ENCODE measurements at regions of chr12 and their contacts with region 1.

Region 1: DNA sequence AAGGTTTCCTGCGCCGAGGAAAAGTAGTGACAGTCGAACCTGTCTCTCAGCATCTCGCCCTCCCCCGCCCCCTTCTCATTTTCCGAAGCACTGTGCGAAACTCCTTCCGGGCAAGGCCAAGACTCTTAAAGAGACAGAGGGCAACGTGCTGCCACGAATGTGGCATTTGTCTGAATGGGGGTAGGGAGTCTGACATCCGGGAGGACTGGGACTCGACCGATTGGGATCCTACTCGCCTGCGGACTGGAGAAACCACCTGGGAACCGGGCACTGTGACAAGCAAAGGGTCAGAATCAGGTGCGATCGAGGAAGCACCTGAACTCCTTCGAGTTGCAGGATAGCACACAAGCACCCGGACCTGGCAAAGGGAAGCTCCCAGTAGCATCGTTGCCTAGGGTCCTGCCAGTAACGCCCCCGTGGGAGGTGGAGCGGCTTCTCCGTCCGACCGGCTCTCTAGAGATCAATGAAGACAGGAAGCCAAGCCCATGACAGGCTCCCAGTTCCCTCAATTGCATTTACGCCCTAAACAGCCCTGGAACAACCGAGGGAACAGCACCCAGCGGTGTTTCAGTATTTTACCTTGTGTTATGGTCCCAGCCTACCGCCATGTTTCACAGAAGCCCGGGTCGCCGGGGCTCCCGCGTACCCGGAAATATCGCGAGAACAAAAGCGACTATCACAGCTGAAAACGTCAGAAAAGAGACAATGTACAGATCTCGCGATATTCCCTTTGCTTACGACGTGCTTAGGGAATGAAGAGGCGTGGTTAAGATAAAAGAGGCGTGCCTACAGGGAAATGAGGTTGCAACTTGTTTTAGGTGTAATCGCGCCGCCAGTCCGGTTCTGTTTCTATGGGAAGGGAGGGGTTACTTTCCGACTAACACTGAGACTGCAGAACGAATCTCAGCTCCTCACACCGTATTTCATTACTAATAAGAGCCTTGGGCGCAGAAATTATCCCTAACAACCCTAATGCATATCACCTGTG is at the start of gene ERGIC2:
- DNase-seq: peak; percentile 93
- ATAC-seq: peak; percentile 95
- H3K4me3 Mint-ChIP-seq: peak within 1 kb of the TSS; percentile 92
- H3K27ac Mint-ChIP-seq: peak within 1 kb of the TSS; percentile 93
- H3K4me1 Mint-ChIP-seq: peaks cover 42% of the 10 kb centered on the region
- H3K27me3 Mint-ChIP-seq: no peaks in the 10 kb centered on the region
- total RNA-seq, gene ERGIC2: 104 to 151 TPM

Region 2: GRCh38 chr12:29148911-29149690 is 231.7 kb before region 1 on chr12 and contains the start of gene FAR2:
- CTCF ChIA-PET with region 1: no interaction called
- POLR2A ChIA-PET with region 1: no interaction called
- intact Hi-C with region 1: loop called in 1 of 2 experiments (anchors 2 kb)
- DNase-seq: peak; percentile 59
- ATAC-seq: peak; percentile 77
- H3K4me3 Mint-ChIP-seq: peak within 1 kb of the TSS; percentile 81
- H3K27ac Mint-ChIP-seq: peak within 1 kb of the TSS; percentile 85
- H3K4me1 Mint-ChIP-seq: peaks cover 16% of the 10 kb centered on the region
- H3K27me3 Mint-ChIP-seq: peaks cover 14% of the 10 kb centered on the region
- total RNA-seq, gene FAR2: 7.8 to 8.1 TPM

Region 3: GRCh38 chr12:29354954-29355353 is 25.9 kb before region 1 on chr12:
- CTCF ChIA-PET with region 1: no interaction called
- POLR2A ChIA-PET with region 1: no interaction called
- intact Hi-C with region 1: loop called in 1 of 2 experiments (anchors 2 kb)
- DNase-seq: no peak
- ATAC-seq: no peak
- H3K4me3 Mint-ChIP-seq: no peak overlapping the region
- H3K27ac Mint-ChIP-seq: no peak overlapping the region
- H3K4me1 Mint-ChIP-seq: no peaks in the 10 kb centered on the region
- H3K27me3 Mint-ChIP-seq: no peaks in the 10 kb centered on the region

Region 4: DNA sequence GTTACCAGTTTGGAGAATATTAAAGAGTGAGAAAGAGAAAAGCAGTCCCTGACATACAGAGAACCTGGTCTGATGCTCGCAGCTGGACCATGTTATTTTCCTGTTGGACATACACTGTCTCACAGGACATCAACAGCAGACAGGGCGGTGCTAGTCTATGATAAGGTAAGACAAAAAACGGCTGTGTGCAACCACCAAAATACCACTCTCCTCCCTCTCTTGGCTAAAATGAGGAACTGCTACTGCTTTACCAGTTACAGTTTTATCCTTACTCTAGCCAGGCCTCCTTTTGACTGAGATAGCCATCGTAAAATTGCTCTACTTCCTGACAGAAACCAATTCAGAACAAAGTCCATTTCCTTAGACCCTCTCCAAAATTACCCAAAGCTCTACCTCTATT is 47.1 kb after region 1 on chr12:
- CTCF ChIA-PET with region 1: no interaction called
- POLR2A ChIA-PET with region 1: no interaction called
- intact Hi-C with region 1: loop called (anchors 2 kb)
- DNase-seq: peak; percentile 10
- ATAC-seq: peak; percentile 52
- H3K4me3 Mint-ChIP-seq: no peak overlapping the region
- H3K27ac Mint-ChIP-seq: peak overlapping the region; percentile 40
- H3K4me1 Mint-ChIP-seq: peaks cover 3% of the 10 kb centered on the region
- H3K27me3 Mint-ChIP-seq: peaks cover 10% of the 10 kb centered on the region

Region 5: DNA sequence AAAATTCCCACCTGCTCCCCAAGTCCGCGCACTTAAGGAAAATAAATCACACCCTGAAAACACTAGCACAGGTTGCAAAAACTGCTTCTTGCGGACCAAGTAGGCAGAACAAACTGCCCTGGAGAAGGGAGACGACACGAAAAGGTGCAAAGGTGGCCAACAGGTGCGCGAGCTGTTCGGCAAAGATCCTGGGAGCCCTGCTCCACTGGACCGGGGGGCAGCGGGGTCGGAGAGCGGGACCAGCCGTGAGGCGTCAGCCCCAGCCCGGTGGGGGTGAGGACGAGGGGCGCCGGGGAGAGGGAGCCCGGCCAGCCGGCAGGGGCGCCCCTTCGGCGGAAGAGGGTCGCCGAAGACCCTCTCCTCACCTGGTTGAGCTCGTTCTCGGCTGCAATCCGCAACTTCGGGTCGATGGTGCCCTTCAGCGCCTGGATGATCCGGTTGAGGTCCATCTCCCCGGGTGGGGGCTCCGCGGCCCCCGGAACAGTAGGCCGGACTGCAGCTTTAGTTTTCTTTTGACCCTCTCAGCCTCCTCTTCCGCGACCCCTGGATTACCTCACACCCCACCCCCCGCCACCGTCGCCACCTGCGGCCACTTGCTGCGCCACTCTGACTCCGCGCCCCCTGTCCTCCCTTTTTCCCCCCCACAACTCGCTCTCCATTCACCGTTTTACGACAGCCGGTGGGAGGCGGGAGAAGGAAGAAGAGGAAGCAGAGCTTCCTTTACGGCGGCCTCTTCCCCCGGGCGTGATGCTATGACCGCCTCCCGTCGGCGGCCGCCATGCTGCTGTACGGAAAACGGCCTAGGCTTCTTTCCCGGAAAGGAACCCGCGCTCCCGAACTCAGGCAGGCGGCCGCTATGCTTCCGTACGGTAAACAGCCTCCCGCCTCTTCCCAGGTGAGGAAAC is 1314.6 kb after region 1 on chr12 and contains the start of gene IPO8:
- CTCF ChIA-PET with region 1: no interaction called
- POLR2A ChIA-PET with region 1: no interaction called
- intact Hi-C with region 1: loop called in 1 of 2 experiments (anchors 1 kb)
- DNase-seq: peak; percentile 91
- ATAC-seq: peak; percentile 90
- H3K4me3 Mint-ChIP-seq: peak within 1 kb of the TSS; percentile 93
- H3K27ac Mint-ChIP-seq: peak within 1 kb of the TSS; percentile 95
- H3K4me1 Mint-ChIP-seq: peaks cover 37% of the 10 kb centered on the region
- H3K27me3 Mint-ChIP-seq: no peaks in the 10 kb centered on the region
- total RNA-seq, gene IPO8: 48.7 to 51.4 TPM

Region 6: GRCh38 chr12:30754709-30755394 is 1374.0 kb after region 1 on chr12 and contains the start of gene CAPRIN2:
- CTCF ChIA-PET with region 1: no interaction called
- POLR2A ChIA-PET with region 1: no interaction called
- intact Hi-C with region 1: loop called (anchors 1 to 5 kb)
- DNase-seq: peak; percentile 96
- ATAC-seq: peak; percentile 94
- H3K4me3 Mint-ChIP-seq: peak within 1 kb of the TSS; percentile 86
- H3K27ac Mint-ChIP-seq: peak within 1 kb of the TSS; percentile 78
- H3K4me1 Mint-ChIP-seq: peaks cover 36% of the 10 kb centered on the region
- H3K27me3 Mint-ChIP-seq: no peaks in the 10 kb centered on the region
- total RNA-seq, gene CAPRIN2: 10.0 to 19.8 TPM